ENCODE measurements at regions of chr16 and their contacts with region 1.

Region 1: GRCh38 chr16:85539629-85540291 is 73.4 kb upstream of the GSE1 start:
- DNase-seq: no peak
- H3K4me3 Mint-ChIP-seq: no peak overlapping the region
- H3K27ac Mint-ChIP-seq: no peak overlapping the region
- H3K4me1 Mint-ChIP-seq: no peaks in the 10 kb centered on the region
- H3K27me3 Mint-ChIP-seq: no peaks in the 10 kb centered on the region
- CTCF ChIP-seq: no peak

Region 2: DNA sequence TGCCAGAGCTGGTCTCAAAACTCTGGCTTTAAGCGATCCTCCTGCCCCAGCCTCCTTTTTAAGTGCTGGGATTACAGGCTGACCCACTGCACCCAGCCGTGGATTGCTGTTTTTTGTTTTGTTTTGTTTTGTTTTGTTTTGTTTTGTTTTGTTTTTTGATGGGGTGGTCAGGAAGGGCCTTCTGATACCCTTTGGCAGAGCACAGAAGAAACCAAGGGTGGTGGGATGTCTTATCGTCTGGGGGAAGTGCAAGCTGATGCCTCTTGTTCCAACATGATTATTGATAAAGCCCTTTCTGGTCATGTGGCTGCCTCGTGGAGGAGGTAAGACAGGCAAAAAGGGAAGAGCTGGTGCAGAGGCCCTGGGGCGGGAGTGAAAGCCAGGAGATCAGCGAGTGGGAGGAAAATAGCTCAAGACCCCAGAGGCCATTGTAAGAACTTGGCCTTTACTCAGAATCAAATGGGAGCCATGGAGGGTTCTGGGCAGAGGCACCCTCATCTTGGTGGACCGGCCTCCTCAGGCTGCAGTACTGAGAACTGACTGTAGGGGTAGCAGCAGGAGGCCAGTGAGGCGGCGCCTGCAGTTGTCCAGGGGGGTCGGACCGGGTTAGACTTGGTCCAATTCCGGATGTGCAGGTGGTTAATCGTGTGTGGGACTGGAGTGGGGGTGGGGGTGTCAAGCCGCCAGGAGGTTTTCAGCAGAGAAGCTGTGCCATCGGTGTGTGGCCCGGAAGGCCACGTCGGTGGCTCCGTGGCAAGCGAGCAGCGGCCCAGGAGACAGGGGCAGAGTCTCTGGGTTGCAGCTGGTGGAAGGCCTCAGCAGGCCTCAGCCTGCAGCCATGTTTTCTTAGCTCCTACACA is 11.0 kb before region 1 on chr16:
- CTCF ChIA-PET with region 1: interaction called, 12 read pairs
- POLR2A ChIA-PET with region 1: interaction called, 4 read pairs
- intact Hi-C with region 1: no loop called
- DNase-seq: no peak
- H3K4me3 Mint-ChIP-seq: no peak overlapping the region
- H3K27ac Mint-ChIP-seq: no peak overlapping the region
- H3K4me1 Mint-ChIP-seq: peaks cover 7% of the 10 kb centered on the region
- H3K27me3 Mint-ChIP-seq: no peaks in the 10 kb centered on the region
- CTCF ChIP-seq: peak; percentile 22